Spleen (tissue), 13 donors: ENCODE measurements at regions of chr6 and their contacts with region 1.

Region 1: GRCh38 chr6:161429921-161430490 is 156.1 kb upstream of the AGPAT4 start:
- DNase-seq: no peak
- H3K4me3 ChIP-seq: no peak overlapping the region
- H3K27ac ChIP-seq: no peak overlapping the region
- H3K4me1 ChIP-seq: peaks cover 0 to 4% (median 0%) of the 10 kb centered on the region in 6 donors
- H3K27me3 ChIP-seq: no peaks in the 10 kb centered on the region
- CTCF ChIP-seq: no peak
- POLR2A ChIP-seq: no peak

Region 2: GRCh38 chr6:161694995-161695394 is 265.0 kb after region 1 on chr6:
- intact Hi-C with region 1: loop called (anchors 10 kb)
- DNase-seq: no peak
- H3K4me3 ChIP-seq: no peak overlapping the region
- H3K27ac ChIP-seq: no peak overlapping the region
- H3K4me1 ChIP-seq: no peaks in the 10 kb centered on the region
- H3K27me3 ChIP-seq: no peaks in the 10 kb centered on the region
- CTCF ChIP-seq: peak in 7 of 11 experiments; percentile 24 to 57 (median 38)
- POLR2A ChIP-seq: no peak